ENCODE measurements at regions of chr1 and their contacts with region 1.

Region 1: GRCh38 chr1:58546520-58547308 is at the start of gene OMA1:
- DNase-seq: peak; percentile 94 to 99
- H3K4me3 ChIP-seq: peak within 1 kb of the TSS; percentile 83 to 87
- H3K27ac ChIP-seq: peak within 1 kb of the TSS; percentile 99 to 100
- H3K4me1 ChIP-seq: peaks cover 0 to 5% of the 10 kb centered on the region in 2 donors
- H3K27me3 ChIP-seq: no peaks in the 10 kb centered on the region
- CTCF ChIP-seq: peak; percentile 96 to 99 (median 97)
- total RNA-seq, gene OMA1: 2.4 TPM

Region 2: GRCh38 chr1:58430420-58431275 is 116.1 kb before region 1 on chr1:
- intact Hi-C with region 1: no loop called
- DNase-seq: no peak
- H3K4me3 ChIP-seq: no peak overlapping the region
- H3K27ac ChIP-seq: peak overlapping the region in 1 of 2 donors; percentile 38
- H3K4me1 ChIP-seq: no peaks in the 10 kb centered on the region
- H3K27me3 ChIP-seq: no peaks in the 10 kb centered on the region
- CTCF ChIP-seq: no peak

Region 3: DNA sequence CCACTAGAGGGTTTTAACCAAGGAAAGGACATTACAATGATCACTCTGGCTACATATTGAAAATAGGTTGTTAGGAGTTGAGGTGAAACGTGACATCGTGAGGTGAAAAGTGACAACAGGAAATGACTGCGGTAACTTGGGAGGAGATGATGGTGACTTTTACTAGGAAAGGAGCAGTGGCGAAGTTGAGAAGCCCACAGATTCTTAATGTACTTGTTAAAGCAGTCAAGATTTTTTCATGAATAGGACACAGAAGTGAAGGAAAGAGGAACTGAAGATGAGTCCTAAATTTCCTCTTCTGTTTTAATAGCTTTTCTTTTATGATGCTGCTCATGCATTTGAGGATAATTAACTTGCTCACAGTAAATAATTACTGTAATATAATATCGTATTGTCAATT is 59.7 kb before region 1 on chr1:
- intact Hi-C with region 1: no loop called
- DNase-seq: no peak
- H3K4me3 ChIP-seq: no peak overlapping the region
- H3K27ac ChIP-seq: no peak overlapping the region
- H3K4me1 ChIP-seq: no peaks in the 10 kb centered on the region
- H3K27me3 ChIP-seq: no peaks in the 10 kb centered on the region
- CTCF ChIP-seq: no peak

Region 4: DNA sequence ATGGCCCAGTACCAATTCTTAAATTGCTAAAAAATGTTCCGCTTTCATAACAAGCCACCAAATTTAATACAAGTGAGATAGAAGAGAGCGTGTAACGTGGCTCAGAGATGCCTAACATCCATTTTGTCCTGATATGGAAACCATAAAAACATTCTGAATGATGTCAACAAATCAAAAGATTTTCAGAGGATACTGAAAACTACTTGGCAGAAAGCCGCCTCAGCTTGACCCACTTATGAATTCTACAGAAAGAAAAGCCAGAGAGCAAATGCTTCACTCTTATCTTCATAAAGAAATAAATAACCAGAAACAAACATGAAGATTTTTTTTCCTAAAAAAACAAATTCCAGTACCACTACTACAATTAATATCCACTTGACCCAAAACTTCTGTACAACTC is 41.4 kb before region 1 on chr1:
- intact Hi-C with region 1: no loop called
- DNase-seq: no peak
- H3K4me3 ChIP-seq: no peak overlapping the region
- H3K27ac ChIP-seq: no peak overlapping the region
- H3K4me1 ChIP-seq: no peaks in the 10 kb centered on the region
- H3K27me3 ChIP-seq: no peaks in the 10 kb centered on the region
- CTCF ChIP-seq: no peak

Region 5: DNA sequence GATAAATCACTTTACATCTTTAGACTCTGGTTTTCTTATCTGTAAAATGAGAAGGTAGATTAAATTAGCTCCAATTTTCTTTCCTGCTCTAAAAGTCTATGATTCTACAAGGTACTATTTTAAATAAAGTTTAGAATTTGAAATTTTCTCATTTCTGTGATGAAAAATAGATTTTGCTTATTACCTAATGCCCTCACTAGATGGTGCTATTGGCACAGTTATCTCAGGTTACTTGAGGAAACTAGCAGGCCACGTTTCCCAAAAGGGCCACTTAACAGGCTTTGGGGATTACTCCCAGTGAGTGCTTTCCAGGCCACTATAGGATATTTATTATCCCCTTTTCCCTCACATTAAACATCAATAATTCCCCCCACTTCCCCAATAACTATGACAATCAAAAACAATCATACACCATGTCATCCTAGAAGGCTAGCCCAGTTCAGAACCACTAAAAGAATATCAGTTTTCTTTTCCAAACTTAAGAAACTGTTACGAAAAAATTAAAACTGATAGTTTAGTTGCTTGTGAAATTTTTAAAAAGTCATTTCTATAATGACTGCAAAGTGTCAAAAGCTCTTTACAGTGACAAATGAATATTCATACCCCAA is 30.8 kb before region 1 on chr1:
- intact Hi-C with region 1: loop called (anchors 1 kb)
- DNase-seq: peak in 1 of 2 donors; percentile 66
- H3K4me3 ChIP-seq: no peak overlapping the region
- H3K27ac ChIP-seq: no peak overlapping the region
- H3K4me1 ChIP-seq: no peaks in the 10 kb centered on the region
- H3K27me3 ChIP-seq: no peaks in the 10 kb centered on the region
- CTCF ChIP-seq: peak; percentile 52 to 72 (median 67)

Region 6: DNA sequence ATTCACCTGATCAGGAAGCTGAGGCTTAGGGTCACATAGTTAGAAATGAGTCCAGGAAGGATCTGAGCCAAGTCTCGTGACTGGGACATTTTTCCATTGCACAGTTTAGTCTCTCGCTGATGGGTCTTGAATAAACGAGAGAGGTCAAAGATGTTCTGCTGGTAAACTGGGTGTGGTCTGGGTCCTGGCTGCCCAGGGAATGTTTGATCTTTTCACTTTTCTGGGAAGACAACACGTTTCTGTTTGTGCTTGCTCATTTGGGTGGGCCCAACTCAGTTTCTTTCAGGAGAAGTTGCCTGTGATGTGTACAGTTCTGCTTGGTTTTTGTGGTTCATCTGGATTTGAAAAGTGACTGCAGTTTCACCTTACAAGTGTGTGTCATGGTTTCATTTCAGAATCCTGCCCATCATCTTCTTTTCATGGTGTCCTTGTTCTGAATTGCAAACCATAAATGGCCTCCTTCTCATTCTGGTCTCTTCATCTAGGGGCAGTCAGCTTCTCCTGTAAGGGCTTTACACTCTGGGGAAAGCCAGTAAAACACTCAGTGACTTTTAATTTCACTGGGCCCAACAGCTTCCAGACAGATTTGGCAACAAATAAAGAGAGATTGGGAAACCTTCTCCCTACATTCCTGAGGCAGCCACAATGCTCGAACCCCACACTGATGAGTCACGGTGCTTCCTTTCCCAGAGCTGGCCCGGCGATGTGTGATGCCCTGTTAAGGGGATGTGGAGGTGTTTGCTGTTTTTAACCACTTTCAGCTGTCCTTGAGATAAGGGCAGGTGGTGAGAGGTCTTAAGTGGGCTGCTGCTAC is 37.6 kb after region 1 on chr1:
- intact Hi-C with region 1: loop called (anchors 2 kb)
- DNase-seq: peak; percentile 59 to 94
- H3K4me3 ChIP-seq: no peak overlapping the region
- H3K27ac ChIP-seq: peak overlapping the region; percentile 71 to 89
- H3K4me1 ChIP-seq: peaks cover 7 to 25% of the 10 kb centered on the region in 2 donors
- H3K27me3 ChIP-seq: no peaks in the 10 kb centered on the region
- CTCF ChIP-seq: no peak

Region 7: DNA sequence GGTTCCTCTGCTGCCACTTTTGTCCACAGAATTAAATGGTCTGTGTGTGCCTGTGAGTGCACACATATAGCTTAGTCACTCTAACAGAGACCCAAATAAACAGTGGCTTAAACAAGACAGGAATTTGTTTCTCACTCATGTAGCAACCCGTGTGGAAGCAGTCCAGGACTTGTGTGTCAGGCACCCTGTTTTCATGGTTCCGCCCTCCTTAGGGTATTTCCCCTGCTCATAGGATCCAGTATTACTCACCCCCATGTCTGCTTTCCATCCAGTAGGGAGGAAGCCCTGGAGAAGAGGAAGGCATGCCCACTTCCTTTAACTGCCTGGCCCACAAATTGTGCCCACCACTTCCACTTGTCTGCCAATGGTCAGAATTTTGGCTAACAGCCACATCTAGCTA is 71.6 kb after region 1 on chr1:
- intact Hi-C with region 1: loop called (anchors 2 kb)
- DNase-seq: peak; percentile 46 to 90
- H3K4me3 ChIP-seq: no peak overlapping the region
- H3K27ac ChIP-seq: peak overlapping the region; percentile 31 to 58
- H3K4me1 ChIP-seq: peaks cover 0 to 14% of the 10 kb centered on the region in 2 donors
- H3K27me3 ChIP-seq: no peaks in the 10 kb centered on the region
- CTCF ChIP-seq: no peak

Region 8: GRCh38 chr1:58699011-58699762 is 152.5 kb after region 1 on chr1:
- intact Hi-C with region 1: no loop called
- DNase-seq: no peak
- H3K4me3 ChIP-seq: peak overlapping the region; percentile 71 to 90
- H3K27ac ChIP-seq: peak overlapping the region; percentile 82 to 85
- H3K4me1 ChIP-seq: peaks cover 8% of the 10 kb centered on the region in 2 donors
- H3K27me3 ChIP-seq: no peaks in the 10 kb centered on the region
- CTCF ChIP-seq: no peak

Region 9: GRCh38 chr1:58755468-58755872 is 208.8 kb after region 1 on chr1:
- intact Hi-C with region 1: loop called (anchors 10 kb)
- DNase-seq: peak; percentile 78 to 93
- H3K4me3 ChIP-seq: peak overlapping the region in 1 of 2 donors; percentile 21
- H3K27ac ChIP-seq: peak overlapping the region; percentile 77 to 81
- H3K4me1 ChIP-seq: peaks cover 4 to 23% of the 10 kb centered on the region in 2 donors
- H3K27me3 ChIP-seq: no peaks in the 10 kb centered on the region
- CTCF ChIP-seq: no peak